ENCODE measurements at regions of chr4 and their contacts with region 1.

Region 1: DNA sequence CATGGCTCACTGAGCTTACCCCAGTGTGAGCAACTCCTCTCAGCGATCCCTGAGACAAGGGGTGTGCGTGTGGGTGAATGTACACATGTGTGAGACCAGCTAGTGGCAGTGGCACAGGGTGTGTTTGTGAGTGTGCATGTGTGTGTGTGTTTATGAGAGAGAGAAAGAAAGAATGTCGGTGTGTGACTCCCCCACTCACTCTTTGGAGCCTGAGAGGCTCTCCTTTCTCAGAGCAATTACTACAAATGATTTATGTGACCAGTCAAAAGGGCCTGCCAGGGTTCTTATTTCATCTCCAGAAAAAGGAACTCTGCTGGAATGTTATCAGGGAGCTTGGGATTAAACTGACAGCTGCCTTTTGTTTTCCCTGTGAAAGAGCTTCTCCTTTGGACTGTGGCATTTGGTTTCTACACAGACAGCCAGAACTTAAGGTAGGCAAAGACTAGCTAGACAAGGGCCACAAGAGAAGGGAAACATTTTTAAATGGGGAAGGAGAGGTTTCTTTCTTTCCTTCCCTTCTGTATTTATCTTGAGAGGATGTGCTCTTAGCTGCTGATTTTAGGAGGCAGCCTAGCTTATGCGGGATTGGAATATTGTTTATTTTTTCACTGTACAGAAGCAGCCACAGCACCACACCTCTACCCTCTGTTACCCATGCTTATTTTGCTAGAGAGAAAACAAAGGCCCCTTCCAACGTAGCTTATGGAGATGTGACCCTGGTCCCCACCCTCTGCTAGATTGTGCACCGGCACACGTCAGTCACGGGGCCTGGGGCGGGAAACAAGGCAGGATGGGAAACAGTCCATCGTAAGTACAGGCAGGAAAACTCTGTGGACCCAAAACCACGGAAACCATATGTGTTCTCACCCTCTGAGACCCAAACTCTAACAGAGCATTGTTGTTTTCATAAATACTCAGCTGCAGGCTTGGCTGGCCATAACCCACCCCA is 143.5 kb downstream of the MGST2 start:
- DNase-seq: no peak
- H3K4me3 ChIP-seq: no peak overlapping the region
- H3K27ac ChIP-seq: no peak overlapping the region
- H3K4me1 ChIP-seq: peaks cover 0 to 3% (median 1%) of the 10 kb centered on the region in 4 experiments; a peak in 2 of 7 replicates
- H3K27me3 ChIP-seq: no peaks in the 10 kb centered on the region
- CTCF ChIP-seq: no peak
- EP300 ChIP-seq: no peak
- POLR2A ChIP-seq: no peak
- RAD21 ChIP-seq: no peak

Region 2: GRCh38 chr4:139794158-139794954 is 14.7 kb before region 1 on chr4:
- CTCF ChIA-PET with region 1: interaction called, 10 read pairs
- POLR2A ChIA-PET with region 1: interaction called, 3 read pairs
- DNase-seq: no peak
- H3K4me3 ChIP-seq: no peak overlapping the region
- H3K27ac ChIP-seq: no peak overlapping the region
- H3K4me1 ChIP-seq: peaks cover 0 to 4% (median 1%) of the 10 kb centered on the region in 4 experiments; a peak in 1 of 7 replicates
- H3K27me3 ChIP-seq: no peaks in the 10 kb centered on the region
- CTCF ChIP-seq: no peak
- EP300 ChIP-seq: no peak
- POLR2A ChIP-seq: no peak
- RAD21 ChIP-seq: no peak

Region 3: DNA sequence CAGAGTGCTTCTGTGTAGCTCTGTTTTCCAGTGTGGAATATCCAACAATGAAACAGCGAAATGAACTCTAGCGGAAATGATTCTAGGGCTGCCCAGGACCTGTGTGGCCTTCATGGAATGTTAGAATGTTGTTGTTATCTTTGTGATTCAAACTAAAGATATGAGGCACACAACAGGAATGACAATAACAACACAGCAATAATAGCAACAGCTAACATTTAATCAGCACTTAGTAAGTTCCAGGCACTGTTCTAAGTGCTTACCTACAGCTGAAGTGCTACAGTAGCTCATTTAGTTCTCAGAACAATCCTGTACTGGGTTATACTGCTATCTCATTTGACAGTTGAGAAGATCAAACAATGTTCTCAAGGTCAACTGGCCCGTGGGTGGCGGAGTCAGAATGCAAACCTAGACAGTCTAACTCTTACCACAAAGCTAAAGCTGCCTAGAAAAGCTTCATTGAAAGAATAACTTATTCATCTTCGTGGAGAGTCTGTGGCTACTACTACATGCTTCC is 281.2 kb after region 1 on chr4:
- CTCF ChIA-PET with region 1: no interaction called
- POLR2A ChIA-PET with region 1: no interaction called
- DNase-seq: no peak
- H3K4me3 ChIP-seq: no peak overlapping the region
- H3K27ac ChIP-seq: no peak overlapping the region
- H3K4me1 ChIP-seq: peaks cover 7 to 31% (median 22%) of the 10 kb centered on the region in 4 experiments
- H3K27me3 ChIP-seq: no peaks in the 10 kb centered on the region
- CTCF ChIP-seq: no peak
- EP300 ChIP-seq: no peak
- POLR2A ChIP-seq: no peak
- RAD21 ChIP-seq: no peak

Measured in H1 (cell line).